A673 (cell line): ENCODE measurements at regions of chr7 and their contacts with region 1.

Region 1: GRCh38 chr7:39465055-39465929 is 100.9 kb upstream of the YAE1 start:
- DNase-seq: peak; percentile 70
- H3K4me3 ChIP-seq: no peak overlapping the region
- H3K27ac ChIP-seq: no peak overlapping the region
- H3K4me1 ChIP-seq: peaks cover 14% of the 10 kb centered on the region
- H3K27me3 ChIP-seq: peaks cover 67% of the 10 kb centered on the region
- CTCF ChIP-seq: peak; percentile 82

Region 2: GRCh38 chr7:38796626-38797501 is 668.4 kb before region 1 on chr7:
- CTCF ChIA-PET with region 1: no interaction called
- POLR2A ChIA-PET with region 1: no interaction called
- intact Hi-C with region 1: loop called (anchors 2 kb)
- DNase-seq: peak; percentile 65
- H3K4me3 ChIP-seq: no peak overlapping the region
- H3K27ac ChIP-seq: no peak overlapping the region
- H3K4me1 ChIP-seq: no peaks in the 10 kb centered on the region
- H3K27me3 ChIP-seq: no peaks in the 10 kb centered on the region
- CTCF ChIP-seq: peak; percentile 80

Region 3: DNA sequence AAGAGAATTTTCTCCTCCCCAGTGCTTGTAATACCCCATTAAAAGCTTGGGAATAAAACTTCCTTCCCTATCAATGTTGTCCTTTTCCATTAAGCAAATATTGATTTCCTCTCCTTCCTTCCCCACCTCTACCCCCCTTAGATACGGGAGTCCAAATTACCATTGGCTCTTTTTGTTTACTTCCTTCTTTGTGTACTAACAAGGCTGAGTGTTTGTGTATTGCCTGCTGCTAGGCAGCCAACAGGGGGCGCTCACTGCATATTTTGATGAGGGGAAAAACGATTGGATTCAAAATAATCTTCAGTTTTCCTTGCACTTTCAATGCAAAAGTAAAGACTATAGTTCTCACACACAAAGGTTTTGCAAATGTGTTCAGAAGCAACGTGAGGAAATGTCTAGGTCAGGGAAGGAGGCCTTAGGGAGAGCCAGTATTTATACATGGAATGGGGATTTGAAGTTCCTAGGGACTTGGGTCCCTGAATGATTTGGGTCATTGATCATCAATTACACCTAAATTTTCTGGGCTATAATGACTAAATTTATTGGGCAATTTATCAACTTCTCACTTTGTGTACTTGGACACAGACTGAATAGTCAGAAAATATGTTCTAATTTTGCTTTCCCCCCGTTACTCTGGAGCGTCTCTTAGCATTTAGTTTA is 532.7 kb before region 1 on chr7:
- CTCF ChIA-PET with region 1: no interaction called
- POLR2A ChIA-PET with region 1: no interaction called
- intact Hi-C with region 1: loop called (anchors 5 kb)
- DNase-seq: peak; percentile 68
- H3K4me3 ChIP-seq: no peak overlapping the region
- H3K27ac ChIP-seq: no peak overlapping the region
- H3K4me1 ChIP-seq: peaks cover 15% of the 10 kb centered on the region
- H3K27me3 ChIP-seq: peaks cover 8% of the 10 kb centered on the region
- CTCF ChIP-seq: peak; percentile 98

Region 4: DNA sequence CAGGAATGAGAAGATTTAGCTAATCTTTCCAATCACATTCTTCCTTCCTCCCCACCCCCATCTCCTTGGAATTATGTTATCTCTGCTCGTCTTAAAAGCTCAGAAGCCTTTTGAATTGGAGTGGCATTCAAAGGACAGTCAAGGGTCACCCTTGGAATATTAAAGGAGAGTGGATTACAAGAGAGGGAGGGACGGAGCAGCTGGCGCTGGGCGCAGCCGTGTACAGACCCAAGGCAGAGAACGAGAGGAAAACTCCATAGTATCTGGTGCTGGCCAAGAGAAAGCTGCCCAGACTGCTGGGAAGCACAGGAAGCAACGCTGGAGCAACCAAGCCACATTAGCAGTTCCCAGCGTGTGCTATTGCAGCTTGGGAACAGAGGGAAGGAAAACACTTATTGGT is 391.9 kb before region 1 on chr7:
- CTCF ChIA-PET with region 1: no interaction called
- POLR2A ChIA-PET with region 1: no interaction called
- intact Hi-C with region 1: no loop called
- DNase-seq: no peak
- H3K4me3 ChIP-seq: no peak overlapping the region
- H3K27ac ChIP-seq: no peak overlapping the region
- H3K4me1 ChIP-seq: no peaks in the 10 kb centered on the region
- H3K27me3 ChIP-seq: peaks cover 4% of the 10 kb centered on the region
- CTCF ChIP-seq: no peak

Region 5: GRCh38 chr7:39336442-39336841 is 128.8 kb before region 1 on chr7:
- CTCF ChIA-PET with region 1: no interaction called
- POLR2A ChIA-PET with region 1: no interaction called
- intact Hi-C with region 1: no loop called
- DNase-seq: no peak
- H3K4me3 ChIP-seq: no peak overlapping the region
- H3K27ac ChIP-seq: no peak overlapping the region
- H3K4me1 ChIP-seq: no peaks in the 10 kb centered on the region
- H3K27me3 ChIP-seq: peaks cover 41% of the 10 kb centered on the region
- CTCF ChIP-seq: no peak

Region 6: GRCh38 chr7:39493934-39494333 is 28.6 kb after region 1 on chr7:
- CTCF ChIA-PET with region 1: no interaction called
- POLR2A ChIA-PET with region 1: no interaction called
- intact Hi-C with region 1: no loop called
- DNase-seq: no peak
- H3K4me3 ChIP-seq: no peak overlapping the region
- H3K27ac ChIP-seq: no peak overlapping the region
- H3K4me1 ChIP-seq: no peaks in the 10 kb centered on the region
- H3K27me3 ChIP-seq: peaks cover 20% of the 10 kb centered on the region
- CTCF ChIP-seq: no peak